Activated CD4-positive, alpha-beta memory T cell treated with anti-CD3 and anti-CD28 coated beads for 36 hours (primary cell): ENCODE measurements at regions of chr13 and their contacts with region 1.

Region 1: DNA sequence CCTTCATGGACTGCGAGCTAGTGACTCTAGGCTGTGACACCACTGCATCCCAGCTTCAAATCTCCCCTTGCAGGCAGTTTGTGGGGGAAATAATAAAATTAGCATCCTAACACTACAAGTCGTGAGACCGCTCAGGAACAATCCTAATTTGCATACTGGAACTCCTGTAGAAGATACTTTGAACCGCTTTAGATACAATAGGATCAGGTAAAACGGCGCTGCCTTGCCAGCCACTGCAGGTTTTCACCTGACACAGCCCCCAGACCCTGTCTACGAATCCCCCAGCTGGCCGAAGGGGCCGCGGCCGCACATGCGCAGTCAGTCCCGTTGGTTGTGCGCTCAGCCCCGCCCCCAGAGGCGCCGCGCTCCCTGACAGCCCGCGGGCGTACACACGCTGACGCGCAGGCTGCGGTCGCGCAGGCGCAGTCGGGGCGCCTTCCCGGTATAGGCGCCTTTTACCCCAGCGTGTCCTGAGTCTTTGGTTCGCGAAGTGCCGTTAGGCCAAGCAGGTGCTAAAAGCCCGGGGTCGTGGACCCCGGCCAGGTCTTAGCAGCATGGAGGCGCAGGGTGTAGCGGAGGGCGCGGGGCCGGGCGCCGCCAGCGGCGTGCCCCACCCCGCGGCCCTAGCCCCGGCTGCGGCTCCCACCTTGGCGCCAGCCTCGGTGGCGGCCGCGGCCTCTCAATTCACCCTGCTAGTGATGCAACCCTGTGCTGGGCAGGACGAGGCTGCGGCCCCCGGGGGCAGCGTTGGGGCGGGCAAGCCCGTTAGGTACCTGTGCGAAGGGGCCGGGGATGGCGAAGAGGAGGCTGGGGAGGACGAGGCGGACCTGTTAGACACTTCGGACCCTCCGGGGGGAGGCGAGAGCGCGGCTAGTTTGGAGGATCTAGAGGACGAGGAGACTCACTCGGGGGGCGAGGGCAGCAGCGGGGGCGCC is at the start of gene RFXAP:
- DNase-seq: peak; percentile 92
- H3K4me3 Mint-ChIP-seq: peak within 1 kb of the TSS; percentile 91
- H3K27ac Mint-ChIP-seq: peak within 1 kb of the TSS; percentile 82
- H3K4me1 Mint-ChIP-seq: peaks cover 42% of the 10 kb centered on the region
- H3K27me3 Mint-ChIP-seq: peaks cover 7% of the 10 kb centered on the region
- total RNA-seq, gene RFXAP: 10.0 to 13.0 TPM

Region 2: DNA sequence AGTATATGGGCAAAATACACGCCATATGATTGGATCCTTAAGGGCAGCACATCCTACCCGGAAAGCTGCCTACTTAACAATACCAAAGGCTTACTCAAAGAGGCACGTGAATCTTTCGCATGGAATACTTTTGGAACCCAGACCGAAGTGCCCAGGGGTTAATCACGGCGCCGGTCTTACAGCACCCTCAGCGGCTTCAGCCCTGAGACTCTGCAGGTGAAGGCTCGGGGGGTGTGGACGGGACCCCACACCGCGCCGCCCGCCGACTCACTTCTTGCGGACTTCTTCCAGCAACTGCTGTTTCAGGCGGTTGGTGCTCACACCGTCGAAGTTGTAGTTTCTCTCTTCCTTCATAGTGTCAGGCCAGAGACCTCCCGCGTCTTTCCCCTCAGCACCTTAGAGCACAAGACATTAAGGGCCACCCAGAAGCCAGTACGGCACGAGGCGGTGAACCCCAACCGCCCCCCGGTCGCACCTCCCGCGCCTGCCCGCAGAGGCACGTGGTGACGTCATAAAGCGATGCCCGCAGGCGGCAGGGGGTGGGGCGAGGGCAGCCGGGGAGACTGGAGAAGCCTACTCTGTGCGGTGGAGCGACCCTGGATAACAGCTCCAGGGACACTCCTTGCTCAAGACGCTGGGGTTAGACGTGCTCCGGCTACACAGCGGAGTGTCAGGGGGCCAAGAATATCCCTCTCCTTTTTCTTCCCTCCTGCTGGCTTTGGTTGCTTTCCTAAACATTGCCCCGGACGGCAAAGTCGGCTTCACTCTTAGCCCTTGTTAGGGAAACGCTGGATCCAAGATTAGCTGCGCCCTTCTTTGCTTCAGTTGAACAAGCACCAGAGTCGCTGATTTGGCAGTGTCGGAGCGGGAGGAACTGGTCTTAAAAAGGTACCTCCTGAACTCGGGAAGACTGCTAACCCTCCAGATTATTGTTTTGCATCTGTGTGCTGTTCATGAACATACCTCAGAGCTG is 521.4 kb before region 1 on chr13 and contains the start of gene CCDC169:
- CTCF ChIA-PET with region 1: no interaction called
- POLR2A ChIA-PET with region 1: no interaction called
- intact Hi-C with region 1: loop called (anchors 1 kb)
- DNase-seq: peak; percentile 78
- H3K4me3 Mint-ChIP-seq: peak within 1 kb of the TSS; percentile 82
- H3K27ac Mint-ChIP-seq: peak within 1 kb of the TSS; percentile 60
- H3K4me1 Mint-ChIP-seq: peaks cover 15% of the 10 kb centered on the region
- H3K27me3 Mint-ChIP-seq: peaks cover 24% of the 10 kb centered on the region
- total RNA-seq, gene CCDC169: 0.69 to 1.1 TPM

Region 3: DNA sequence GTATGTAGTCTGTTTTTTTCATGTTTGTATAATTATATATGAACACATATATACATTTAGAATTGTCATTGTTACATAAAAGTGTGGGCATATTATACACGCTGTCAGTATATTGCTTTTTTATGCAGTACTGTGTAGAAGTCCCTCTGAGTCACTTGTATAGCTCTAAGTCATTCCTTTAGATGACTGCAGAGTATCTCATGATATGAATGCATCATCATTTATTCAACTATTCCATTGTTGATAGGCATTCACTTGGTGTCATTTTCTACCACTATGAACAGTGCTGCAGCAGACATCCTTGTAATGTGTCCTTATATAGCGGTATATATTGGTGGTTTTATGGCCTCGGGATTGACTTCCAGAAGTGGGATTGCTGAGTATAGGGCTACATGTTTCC is 15.2 kb after region 1 on chr13:
- CTCF ChIA-PET with region 1: interaction called, 4 read pairs
- POLR2A ChIA-PET with region 1: no interaction called
- intact Hi-C with region 1: loop called (anchors 1 kb)
- DNase-seq: no peak
- H3K4me3 Mint-ChIP-seq: no peak overlapping the region
- H3K27ac Mint-ChIP-seq: no peak overlapping the region
- H3K4me1 Mint-ChIP-seq: peaks cover 4% of the 10 kb centered on the region
- H3K27me3 Mint-ChIP-seq: no peaks in the 10 kb centered on the region

Region 4: GRCh38 chr13:36999054-36999714 is 180.1 kb after region 1 on chr13 and contains the start of gene ALG5:
- CTCF ChIA-PET with region 1: interaction called, 3 read pairs
- POLR2A ChIA-PET with region 1: interaction called, 3 read pairs
- intact Hi-C with region 1: loop called (anchors 1 kb)
- DNase-seq: peak; percentile 94
- H3K4me3 Mint-ChIP-seq: peak within 1 kb of the TSS; percentile 98
- H3K27ac Mint-ChIP-seq: peak within 1 kb of the TSS; percentile 99
- H3K4me1 Mint-ChIP-seq: peaks cover 36% of the 10 kb centered on the region
- H3K27me3 Mint-ChIP-seq: no peaks in the 10 kb centered on the region
- total RNA-seq, gene ALG5: 25.9 to 27.6 TPM

Region 5: DNA sequence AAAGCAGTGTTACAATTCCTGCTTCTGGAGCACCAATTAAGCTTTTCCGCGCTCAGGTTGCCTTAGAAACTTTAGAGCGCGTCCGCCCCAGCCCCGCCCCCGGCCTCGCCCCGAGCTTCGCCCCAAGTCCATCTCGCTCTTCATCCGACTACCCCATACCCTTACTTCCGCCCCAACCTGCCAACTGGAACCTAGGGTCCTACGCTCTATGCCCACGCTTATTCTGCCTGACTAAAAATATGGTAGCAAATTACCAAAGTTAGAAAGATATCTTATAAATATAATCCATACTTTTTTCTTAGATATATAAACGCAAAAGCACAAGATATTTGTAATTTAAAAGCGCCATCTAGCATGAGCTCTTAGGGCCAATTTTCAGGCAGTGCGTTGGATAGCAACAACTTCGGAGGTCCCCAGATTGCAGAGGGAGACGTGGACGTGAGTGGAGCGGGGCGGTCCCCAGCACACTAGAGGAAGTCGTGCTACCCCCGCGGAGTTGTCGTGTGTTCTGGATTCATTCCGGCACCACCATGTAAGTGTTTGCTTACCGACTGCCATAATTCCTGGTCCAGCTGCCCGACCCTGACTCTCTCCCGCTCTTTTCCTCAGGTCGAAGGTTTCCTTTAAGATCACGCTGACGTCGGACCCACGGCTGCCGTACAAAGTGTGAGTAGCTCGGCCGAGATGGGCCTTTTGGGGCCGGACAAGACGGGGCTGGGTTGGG is 1530.5 kb after region 1 on chr13 and contains the start of gene UFM1:
- CTCF ChIA-PET with region 1: no interaction called
- POLR2A ChIA-PET with region 1: no interaction called
- intact Hi-C with region 1: loop called (anchors 2 kb)
- DNase-seq: peak; percentile 91
- H3K4me3 Mint-ChIP-seq: peak within 1 kb of the TSS; percentile 100
- H3K27ac Mint-ChIP-seq: peak within 1 kb of the TSS; percentile 99
- H3K4me1 Mint-ChIP-seq: peaks cover 35% of the 10 kb centered on the region
- H3K27me3 Mint-ChIP-seq: no peaks in the 10 kb centered on the region
- total RNA-seq, gene UFM1: 45.9 to 46.6 TPM